ENCODE measurements at regions of chr1 and their contacts with region 1.

Region 1: GRCh38 chr1:78607334-78607927 is 12.8 kb upstream of the IFI44L start:
- DNase-seq: no peak

Region 2: GRCh38 chr1:78143152-78143551 is 464.3 kb before region 1 on chr1:
- intact Hi-C with region 1: loop called in 1 of 2 experiments (anchors 5 kb)
- DNase-seq: no peak

Region 3: GRCh38 chr1:78540048-78540447 is 67.4 kb before region 1 on chr1:
- intact Hi-C with region 1: no loop called
- DNase-seq: no peak

Region 4: GRCh38 chr1:79688932-79689331 is 1081.5 kb after region 1 on chr1:
- intact Hi-C with region 1: loop called in 1 of 2 experiments (anchors 5 kb)
- DNase-seq: no peak